IMR-90 (cell line): ENCODE measurements at regions of chr3 and their contacts with region 1.

Region 1: DNA sequence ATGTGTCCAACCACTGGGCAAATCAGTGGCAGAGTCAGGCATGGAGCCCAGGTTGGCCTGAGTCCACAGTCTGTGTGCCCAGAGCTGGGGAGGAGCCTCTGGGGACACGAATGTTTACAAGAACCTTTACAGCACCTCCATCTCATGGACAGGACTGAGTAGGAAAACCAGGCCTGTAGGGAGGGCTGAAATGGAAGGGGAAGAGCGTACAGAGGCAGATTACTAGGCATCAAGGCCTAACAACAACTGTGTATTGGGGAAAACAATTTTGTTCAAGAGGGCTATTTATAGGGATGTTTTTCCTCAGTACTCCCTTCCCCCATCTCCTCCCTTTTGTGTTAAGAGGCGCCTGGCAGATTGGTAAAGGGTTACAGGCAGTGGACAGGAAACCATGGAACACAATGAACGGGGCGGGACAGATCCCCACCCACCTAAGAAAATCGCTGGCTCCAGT is 15.1 kb upstream of the ARHGAP31 start:
- DNase-seq: no peak
- ATAC-seq: no peak
- H3K4me3 ChIP-seq: no peak overlapping the region
- H3K27ac ChIP-seq: no peak overlapping the region
- H3K4me1 ChIP-seq: no peaks in the 10 kb centered on the region
- H3K27me3 ChIP-seq: no peaks in the 10 kb centered on the region
- CTCF ChIP-seq: no peak
- POLR2A ChIP-seq: no peak
- RAD21 ChIP-seq: no peak

Region 2: DNA sequence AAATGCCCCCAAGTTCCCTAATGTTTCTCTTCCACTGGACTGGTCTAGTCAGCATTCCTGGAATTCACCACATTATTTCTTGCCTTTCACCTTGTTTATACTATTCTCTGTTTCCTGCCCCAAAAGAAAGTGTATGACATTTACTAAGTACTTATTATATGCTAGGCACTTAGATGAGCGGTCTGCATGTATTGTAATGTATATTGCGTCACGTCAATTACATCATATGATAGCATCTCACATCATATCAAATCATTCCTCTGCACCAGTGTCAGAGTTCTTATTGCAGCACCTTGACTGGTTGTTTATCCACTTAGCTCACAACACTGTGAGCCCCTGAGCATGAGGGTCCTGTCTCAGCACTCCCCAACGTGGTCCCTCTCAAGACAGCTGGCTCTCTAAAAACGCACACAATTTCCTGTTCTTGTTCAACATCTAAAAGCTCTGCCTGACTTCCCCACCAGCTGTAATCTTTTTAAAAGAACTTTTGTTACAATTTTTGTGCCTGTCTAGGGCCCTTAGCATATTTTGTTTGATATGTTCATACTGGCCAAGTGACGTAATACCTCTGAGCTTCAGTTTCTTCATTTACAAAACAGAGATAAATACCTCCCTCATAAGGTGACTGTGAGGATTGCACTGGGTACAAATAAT is 73.8 kb after region 1 on chr3:
- CTCF ChIA-PET with region 1: interaction called, 7 read pairs
- POLR2A ChIA-PET with region 1: no interaction called
- dilution Hi-C with region 1: no loop called
- in situ Hi-C with region 1: no loop called
- intact Hi-C with region 1: loop called (anchors 1 kb)
- DNase-seq: peak; percentile 89
- ATAC-seq: peak; percentile 83
- H3K4me3 ChIP-seq: no peak overlapping the region
- H3K27ac ChIP-seq: peak overlapping the region; percentile 94
- H3K4me1 ChIP-seq: peaks cover 19% of the 10 kb centered on the region
- H3K27me3 ChIP-seq: no peaks in the 10 kb centered on the region
- CTCF ChIP-seq: peak; percentile 64
- POLR2A ChIP-seq: no peak
- RAD21 ChIP-seq: peak; percentile 74

Region 3: GRCh38 chr3:119463171-119464169 is 184.3 kb after region 1 on chr3 and contains the start of gene TMEM39A:
- CTCF ChIA-PET with region 1: no interaction called
- POLR2A ChIA-PET with region 1: no interaction called
- dilution Hi-C with region 1: no loop called
- in situ Hi-C with region 1: no loop called
- intact Hi-C with region 1: loop called (anchors 1 kb)
- DNase-seq: peak; percentile 98
- ATAC-seq: peak; percentile 96
- H3K4me3 ChIP-seq: peak within 1 kb of the TSS; percentile 75
- H3K27ac ChIP-seq: peak within 1 kb of the TSS; percentile 87
- H3K4me1 ChIP-seq: peaks cover 3% of the 10 kb centered on the region
- H3K27me3 ChIP-seq: no peaks in the 10 kb centered on the region
- CTCF ChIP-seq: 0 out of 2 replicates have a peak, but pooled peaks have one; percentile 18
- POLR2A ChIP-seq: peak; percentile 97
- RAD21 ChIP-seq: no peak
- total RNA-seq, gene TMEM39A: 88.6 and 117 TPM in 2 replicates